ENCODE measurements at regions of chr3 and their contacts with region 1.

Region 1: GRCh38 chr3:15377961-15378791 is 45.8 kb upstream of the SH3BP5 start:
- DNase-seq: peak; percentile 97
- H3K4me3 Mint-ChIP-seq: no peak overlapping the region
- H3K27ac Mint-ChIP-seq: peak overlapping the region; percentile 24
- H3K4me1 Mint-ChIP-seq: peaks cover 5% of the 10 kb centered on the region
- H3K27me3 Mint-ChIP-seq: no peaks in the 10 kb centered on the region

Region 2: DNA sequence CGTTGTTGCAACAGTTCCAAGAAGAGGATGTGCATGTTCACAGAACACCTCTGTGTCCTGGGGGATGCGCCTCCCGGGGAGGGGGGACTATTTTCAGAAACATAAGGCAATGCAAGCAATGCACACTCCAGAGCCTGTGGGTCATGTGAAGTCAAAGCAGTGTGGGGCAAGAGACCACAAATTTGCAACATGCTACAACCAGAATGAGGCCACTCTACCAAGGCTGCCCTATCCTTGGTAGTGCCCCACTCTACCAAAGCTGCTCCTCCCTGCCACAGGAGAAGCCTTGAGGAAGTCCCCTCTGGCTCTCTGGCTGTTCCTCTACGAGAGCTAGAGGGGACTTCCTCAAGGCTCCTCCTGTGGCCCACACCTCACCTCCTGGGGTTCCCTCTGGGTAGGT is 439.2 kb before region 1 on chr3:
- CTCF ChIA-PET with region 1: no interaction called
- intact Hi-C with region 1: no loop called
- DNase-seq: no peak
- H3K4me3 Mint-ChIP-seq: no peak overlapping the region
- H3K27ac Mint-ChIP-seq: no peak overlapping the region
- H3K4me1 Mint-ChIP-seq: peaks cover 6% of the 10 kb centered on the region
- H3K27me3 Mint-ChIP-seq: no peaks in the 10 kb centered on the region

Region 3: DNA sequence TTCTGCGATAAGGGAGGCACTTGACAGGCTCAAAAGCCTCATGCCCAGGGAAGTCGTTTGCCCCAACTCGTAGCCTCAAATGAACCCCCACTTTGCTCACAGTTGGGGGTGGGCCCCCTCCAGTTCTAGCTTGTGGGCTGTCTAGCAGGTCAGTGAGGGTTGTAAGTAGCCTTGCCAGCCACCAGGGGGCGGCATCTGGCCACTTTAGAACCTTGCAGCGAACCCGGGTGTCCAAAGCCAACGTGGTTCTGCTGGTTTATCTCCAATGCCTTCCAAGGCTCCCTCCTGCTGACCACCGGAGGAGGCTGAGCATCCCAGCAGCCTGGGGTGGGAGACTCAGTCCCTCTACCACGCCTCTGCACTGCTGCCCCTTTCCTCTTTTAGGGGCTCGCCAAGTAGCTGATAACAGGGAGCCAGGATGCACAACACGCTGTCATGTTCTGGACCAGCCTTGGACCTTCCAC is 270.1 kb before region 1 on chr3:
- CTCF ChIA-PET with region 1: interaction called, 3 read pairs
- intact Hi-C with region 1: loop called (anchors 2 kb)
- DNase-seq: peak; percentile 76
- H3K4me3 Mint-ChIP-seq: no peak overlapping the region
- H3K27ac Mint-ChIP-seq: no peak overlapping the region
- H3K4me1 Mint-ChIP-seq: no peaks in the 10 kb centered on the region
- H3K27me3 Mint-ChIP-seq: no peaks in the 10 kb centered on the region

Region 4: GRCh38 chr3:15291589-15292541 is 86.3 kb before region 1 on chr3:
- CTCF ChIA-PET with region 1: interaction called, 3 read pairs
- intact Hi-C with region 1: loop called (anchors 1 kb)
- DNase-seq: peak; percentile 84
- H3K4me3 Mint-ChIP-seq: peak overlapping the region; percentile 0
- H3K27ac Mint-ChIP-seq: peak overlapping the region; percentile 76
- H3K4me1 Mint-ChIP-seq: peaks cover 72% of the 10 kb centered on the region
- H3K27me3 Mint-ChIP-seq: no peaks in the 10 kb centered on the region

Region 5: GRCh38 chr3:15332405-15333098 is 45.6 kb before region 1 on chr3 and contains the start of gene SH3BP5:
- CTCF ChIA-PET with region 1: interaction called, 5 read pairs
- intact Hi-C with region 1: loop called (anchors 1 kb)
- DNase-seq: peak; percentile 74
- H3K4me3 Mint-ChIP-seq: peak within 1 kb of the TSS; percentile 89
- H3K27ac Mint-ChIP-seq: peak within 1 kb of the TSS; percentile 57
- H3K4me1 Mint-ChIP-seq: peaks cover 50% of the 10 kb centered on the region
- H3K27me3 Mint-ChIP-seq: peaks cover 2% of the 10 kb centered on the region
- total RNA-seq, gene SH3BP5: 7.9 to 9.0 TPM

Region 6: DNA sequence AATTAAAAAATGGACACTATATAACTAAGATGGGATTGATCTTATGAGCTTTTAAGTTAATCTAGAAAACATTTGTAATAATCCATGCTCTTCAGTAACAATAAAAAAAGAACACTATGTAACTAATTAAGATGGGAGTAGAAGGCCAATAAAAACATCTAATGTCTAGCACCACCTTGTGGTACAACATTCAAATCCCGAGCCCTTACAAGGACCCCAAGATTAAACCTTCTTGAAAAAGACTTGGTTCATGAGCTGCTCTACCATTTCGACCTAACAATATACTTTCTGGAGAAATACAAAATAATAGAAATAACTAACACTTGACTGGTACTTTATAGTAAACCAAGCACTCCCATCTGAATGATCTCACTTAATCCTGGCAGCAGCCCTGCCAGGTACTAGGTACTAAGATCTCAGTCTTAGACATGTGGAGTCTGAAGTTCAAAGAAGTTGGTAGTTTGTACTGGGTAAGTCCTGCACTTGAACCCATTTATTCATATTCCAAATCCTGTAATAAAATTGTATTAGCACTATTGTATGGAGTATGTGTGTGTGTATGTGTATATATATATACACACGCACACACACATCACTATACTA is 27.4 kb after region 1 on chr3:
- CTCF ChIA-PET with region 1: interaction called, 13 read pairs
- intact Hi-C with region 1: loop called (anchors 2 kb)
- DNase-seq: peak; percentile 10
- H3K4me3 Mint-ChIP-seq: no peak overlapping the region
- H3K27ac Mint-ChIP-seq: no peak overlapping the region
- H3K4me1 Mint-ChIP-seq: peaks cover 1% of the 10 kb centered on the region
- H3K27me3 Mint-ChIP-seq: no peaks in the 10 kb centered on the region